ENCODE measurements at regions of chrX and their contacts with region 1.

Region 1: GRCh38 chrX:19887911-19888879 is 795 bp upstream of the SH3KBP1 start:
- DNase-seq: peak; percentile 54
- ATAC-seq: peak; percentile 42
- H3K4me3 Mint-ChIP-seq: peak overlapping the region; percentile 72
- H3K27ac Mint-ChIP-seq: peak overlapping the region; percentile 87
- H3K4me1 Mint-ChIP-seq: peaks cover 44% of the 10 kb centered on the region
- H3K27me3 Mint-ChIP-seq: no peaks in the 10 kb centered on the region

Region 2: DNA sequence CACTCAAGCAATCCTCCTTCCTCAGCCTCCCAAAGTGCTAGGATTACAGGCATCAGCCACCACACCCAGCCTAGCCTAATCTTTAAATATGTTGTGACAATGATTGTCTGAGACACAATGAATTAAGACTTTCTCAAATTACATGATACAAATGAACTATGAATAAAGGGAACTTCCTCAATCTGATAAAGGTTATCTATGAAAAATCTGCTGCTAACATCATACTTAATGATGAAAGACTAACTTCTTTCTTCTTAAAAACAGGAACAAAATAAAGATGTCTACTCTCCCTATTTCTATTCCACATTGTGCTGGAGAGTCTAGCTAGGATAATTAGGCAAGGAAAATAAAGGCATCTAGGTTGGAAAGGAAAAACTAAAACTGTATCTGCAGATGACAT is 484.5 kb before region 1 on chrX:
- CTCF ChIA-PET with region 1: no interaction called
- POLR2A ChIA-PET with region 1: no interaction called
- intact Hi-C with region 1: no loop called
- DNase-seq: no peak
- ATAC-seq: no peak
- H3K4me3 Mint-ChIP-seq: no peak overlapping the region
- H3K27ac Mint-ChIP-seq: no peak overlapping the region
- H3K4me1 Mint-ChIP-seq: no peaks in the 10 kb centered on the region
- H3K27me3 Mint-ChIP-seq: peaks cover 4% of the 10 kb centered on the region

Region 3: DNA sequence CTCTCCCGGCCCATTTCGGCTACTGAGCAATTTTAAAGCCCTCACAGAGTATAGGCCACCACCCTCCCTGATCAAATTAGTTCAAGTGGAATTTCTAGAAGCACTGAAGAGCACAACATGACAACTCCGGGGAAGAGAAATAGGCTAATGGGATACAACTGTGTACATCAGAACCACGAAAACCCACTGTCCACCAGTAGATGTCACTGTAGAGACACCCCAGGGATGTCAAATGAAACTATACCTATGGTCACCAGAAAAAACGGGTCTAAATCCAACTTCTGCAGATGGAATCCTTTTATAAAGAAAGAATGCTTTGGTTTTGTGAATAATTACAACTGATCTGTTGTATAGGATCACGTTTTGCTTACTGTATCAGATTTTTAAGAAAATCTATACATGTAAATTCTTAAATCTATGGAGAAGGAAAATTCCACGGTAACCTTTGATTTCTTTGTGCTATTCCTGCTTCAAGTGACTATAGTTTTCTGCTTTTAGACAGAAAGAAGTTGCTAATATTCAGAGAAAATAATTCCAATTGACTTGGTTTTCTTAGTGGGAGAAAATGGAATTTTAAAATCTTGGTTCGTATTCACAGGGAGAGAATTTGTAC is 343.4 kb before region 1 on chrX:
- CTCF ChIA-PET with region 1: no interaction called
- POLR2A ChIA-PET with region 1: no interaction called
- intact Hi-C with region 1: loop called (anchors 2 to 5 kb)
- DNase-seq: peak; percentile 53
- ATAC-seq: no peak
- H3K4me3 Mint-ChIP-seq: no peak overlapping the region
- H3K27ac Mint-ChIP-seq: no peak overlapping the region
- H3K4me1 Mint-ChIP-seq: peaks cover 28% of the 10 kb centered on the region
- H3K27me3 Mint-ChIP-seq: no peaks in the 10 kb centered on the region

Region 4: DNA sequence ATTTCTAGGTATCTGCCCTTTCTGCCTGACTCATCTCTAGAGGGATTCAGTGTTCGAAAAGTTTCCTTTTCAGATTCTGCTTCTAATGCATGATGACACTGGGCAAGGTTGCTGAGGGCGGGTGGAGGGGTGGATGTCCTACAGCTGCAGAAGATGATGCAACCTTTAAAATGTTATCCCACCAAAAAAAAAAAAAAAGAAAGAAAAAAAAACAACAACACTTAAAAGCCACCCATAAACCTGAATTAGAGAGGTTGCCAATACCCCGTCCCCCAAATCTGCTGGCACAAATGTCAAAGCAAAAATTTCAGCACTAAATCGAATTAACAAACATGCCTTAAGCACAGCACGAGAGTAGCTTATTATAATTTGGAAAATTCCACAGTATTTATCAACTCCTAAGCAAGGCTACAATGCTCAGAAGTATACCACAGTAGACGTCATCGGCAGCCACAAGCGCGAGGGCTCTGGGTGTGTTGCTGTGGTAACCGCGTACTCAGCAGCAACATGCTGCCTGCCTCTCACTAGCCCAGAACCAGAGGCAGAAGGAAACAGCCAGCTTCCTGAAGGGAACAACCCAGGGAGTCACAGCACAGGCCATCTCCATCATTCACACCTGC is 205.4 kb before region 1 on chrX:
- CTCF ChIA-PET with region 1: no interaction called
- POLR2A ChIA-PET with region 1: no interaction called
- intact Hi-C with region 1: loop called (anchors 1 to 5 kb)
- DNase-seq: peak; percentile 87
- ATAC-seq: peak; percentile 82
- H3K4me3 Mint-ChIP-seq: peak overlapping the region; percentile 64
- H3K27ac Mint-ChIP-seq: peak overlapping the region; percentile 95
- H3K4me1 Mint-ChIP-seq: peaks cover 85% of the 10 kb centered on the region
- H3K27me3 Mint-ChIP-seq: no peaks in the 10 kb centered on the region

Region 5: GRCh38 chrX:19747652-19748610 is 140.3 kb before region 1 on chrX:
- CTCF ChIA-PET with region 1: interaction called, 3 read pairs
- POLR2A ChIA-PET with region 1: interaction called, 3 read pairs
- intact Hi-C with region 1: loop called in 1 of 2 experiments (anchors 2 kb)
- DNase-seq: peak; percentile 82
- ATAC-seq: peak; percentile 78
- H3K4me3 Mint-ChIP-seq: peak overlapping the region; percentile 57
- H3K27ac Mint-ChIP-seq: peak overlapping the region; percentile 95
- H3K4me1 Mint-ChIP-seq: peaks cover 91% of the 10 kb centered on the region
- H3K27me3 Mint-ChIP-seq: no peaks in the 10 kb centered on the region

Region 6: GRCh38 chrX:19840899-19841648 is 47.1 kb before region 1 on chrX:
- CTCF ChIA-PET with region 1: no interaction called
- POLR2A ChIA-PET with region 1: no interaction called
- intact Hi-C with region 1: loop called (anchors 2 kb)
- DNase-seq: peak; percentile 63
- ATAC-seq: peak; percentile 69
- H3K4me3 Mint-ChIP-seq: peak overlapping the region; percentile 55
- H3K27ac Mint-ChIP-seq: peak overlapping the region; percentile 97
- H3K4me1 Mint-ChIP-seq: peaks cover 84% of the 10 kb centered on the region
- H3K27me3 Mint-ChIP-seq: no peaks in the 10 kb centered on the region